Heart left ventricle (tissue), 16 donors: ENCODE measurements at regions of chr19 and their contacts with region 1.

Region 1: DNA sequence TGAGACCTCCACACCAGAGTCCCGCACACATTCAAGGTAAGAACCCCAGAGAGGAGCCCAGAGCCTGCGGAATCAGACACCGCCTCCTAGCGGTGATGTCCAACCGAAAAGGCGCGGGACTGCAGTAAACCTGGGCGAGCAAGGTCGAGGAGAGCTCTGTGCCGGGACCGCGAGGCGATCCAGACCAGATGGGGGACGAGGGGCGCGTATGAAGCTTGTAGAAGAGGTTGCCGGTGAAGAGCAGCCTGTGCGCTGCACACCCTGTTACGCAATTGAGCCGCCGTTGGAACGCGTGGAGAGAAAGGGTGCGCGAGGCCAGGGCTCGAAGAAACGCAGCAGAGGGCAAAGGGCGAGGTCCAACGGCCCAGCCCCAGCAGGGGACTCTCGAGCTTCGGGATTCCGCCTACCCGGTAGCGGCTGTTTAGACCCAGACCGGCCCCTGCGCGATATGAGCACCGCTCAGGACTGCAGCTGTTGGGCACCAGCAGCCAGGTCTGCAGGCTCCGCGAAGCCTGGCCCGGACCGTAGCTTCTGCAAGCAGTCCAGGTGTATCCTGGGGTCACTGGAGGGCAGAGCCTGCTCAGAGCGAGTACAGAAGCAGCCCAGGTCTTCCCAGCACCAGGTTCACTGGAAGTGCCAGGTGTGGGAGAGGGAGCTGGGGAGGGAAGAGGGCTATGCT is 65.9 kb upstream of the ZNF599 start:
- DNase-seq: peak in 1 of 5 donors; percentile 26
- ATAC-seq: peak in 3 of 4 donors; percentile 6 to 31 (median 7)
- H3K4me3 ChIP-seq: peak overlapping the region in 10 of 12 donors; percentile 21 to 40 (median 36)
- H3K27ac ChIP-seq: peak overlapping the region in 4 of 12 donors; percentile 1 to 76 (median 68)
- H3K4me1 ChIP-seq: peaks cover 0 to 35% (median 16%) of the 10 kb centered on the region in 12 donors
- H3K27me3 ChIP-seq: no peaks in the 10 kb centered on the region
- CTCF ChIP-seq: peak in 10 of 12 donors; percentile 7 to 51 (median 30)
- POLR2A ChIP-seq: no peak

Region 2: GRCh38 chr19:34787057-34787824 is 51.7 kb before region 1 on chr19:
- intact Hi-C with region 1: no loop called
- DNase-seq: no peak
- ATAC-seq: peak in 3 of 4 donors; percentile 42 to 82 (median 73)
- H3K4me3 ChIP-seq: no peak overlapping the region
- H3K27ac ChIP-seq: no peak overlapping the region
- H3K4me1 ChIP-seq: no peaks in the 10 kb centered on the region
- H3K27me3 ChIP-seq: peaks cover 0 to 3% (median 0%) of the 10 kb centered on the region in 9 donors
- CTCF ChIP-seq: no peak
- POLR2A ChIP-seq: no peak

Region 3: GRCh38 chr19:34804115-34804514 is 34.8 kb before region 1 on chr19:
- intact Hi-C with region 1: no loop called
- DNase-seq: no peak
- ATAC-seq: no peak
- H3K4me3 ChIP-seq: no peak overlapping the region
- H3K27ac ChIP-seq: no peak overlapping the region
- H3K4me1 ChIP-seq: no peaks in the 10 kb centered on the region
- H3K27me3 ChIP-seq: peaks cover 0 to 7% (median 0%) of the 10 kb centered on the region in 9 donors
- CTCF ChIP-seq: no peak
- POLR2A ChIP-seq: no peak

Region 4: GRCh38 chr19:34888091-34888490 is 49.2 kb after region 1 on chr19:
- intact Hi-C with region 1: loop called in 1 of 10 experiments (anchors 2 kb)
- DNase-seq: no peak
- ATAC-seq: no peak
- H3K4me3 ChIP-seq: no peak overlapping the region
- H3K27ac ChIP-seq: no peak overlapping the region
- H3K4me1 ChIP-seq: no peaks in the 10 kb centered on the region
- H3K27me3 ChIP-seq: peaks cover 0 to 4% (median 0%) of the 10 kb centered on the region in 9 donors
- CTCF ChIP-seq: no peak
- POLR2A ChIP-seq: no peak

Region 5: GRCh38 chr19:35013031-35013819 is 174.3 kb after region 1 on chr19:
- intact Hi-C with region 1: loop called in 2 of 10 experiments (anchors 5 to 10 kb)
- DNase-seq: peak; percentile 78 to 90 (median 80)
- ATAC-seq: peak; percentile 52 to 74 (median 69)
- H3K4me3 ChIP-seq: no peak overlapping the region
- H3K27ac ChIP-seq: peak overlapping the region in 7 of 12 donors; percentile 8 to 80 (median 55)
- H3K4me1 ChIP-seq: peaks cover 0 to 63% (median 17%) of the 10 kb centered on the region in 12 donors
- H3K27me3 ChIP-seq: no peaks in the 10 kb centered on the region
- CTCF ChIP-seq: peak; percentile 96 to 99 (median 97)
- POLR2A ChIP-seq: peak in 1 of 2 donors; percentile 19